GM10248 (cell line): ENCODE measurements at regions of chr16 and their contacts with region 1.

Region 1: GRCh38 chr16:27367461-27368357 is 34.3 kb upstream of the IL21R start:
- DNase-seq: peak; percentile 86
- CTCF ChIP-seq: peak; percentile 69

Region 2: GRCh38 chr16:27154705-27155521 is 212.8 kb before region 1 on chr16:
- CTCF ChIA-PET with region 1: interaction called, 19 read pairs
- POLR2A ChIA-PET with region 1: no interaction called
- DNase-seq: peak; percentile 78
- CTCF ChIP-seq: peak; percentile 95

Region 3: GRCh38 chr16:27387724-27388123 is 20.0 kb after region 1 on chr16:
- CTCF ChIA-PET with region 1: interaction called, 64 read pairs
- POLR2A ChIA-PET with region 1: no interaction called
- DNase-seq: no peak
- CTCF ChIP-seq: no peak

Region 4: GRCh38 chr16:27408012-27408601 is 40.4 kb after region 1 on chr16:
- CTCF ChIA-PET with region 1: interaction called, 47 read pairs
- POLR2A ChIA-PET with region 1: interaction called, 5 read pairs
- DNase-seq: peak; percentile 57
- CTCF ChIP-seq: no peak

Region 5: DNA sequence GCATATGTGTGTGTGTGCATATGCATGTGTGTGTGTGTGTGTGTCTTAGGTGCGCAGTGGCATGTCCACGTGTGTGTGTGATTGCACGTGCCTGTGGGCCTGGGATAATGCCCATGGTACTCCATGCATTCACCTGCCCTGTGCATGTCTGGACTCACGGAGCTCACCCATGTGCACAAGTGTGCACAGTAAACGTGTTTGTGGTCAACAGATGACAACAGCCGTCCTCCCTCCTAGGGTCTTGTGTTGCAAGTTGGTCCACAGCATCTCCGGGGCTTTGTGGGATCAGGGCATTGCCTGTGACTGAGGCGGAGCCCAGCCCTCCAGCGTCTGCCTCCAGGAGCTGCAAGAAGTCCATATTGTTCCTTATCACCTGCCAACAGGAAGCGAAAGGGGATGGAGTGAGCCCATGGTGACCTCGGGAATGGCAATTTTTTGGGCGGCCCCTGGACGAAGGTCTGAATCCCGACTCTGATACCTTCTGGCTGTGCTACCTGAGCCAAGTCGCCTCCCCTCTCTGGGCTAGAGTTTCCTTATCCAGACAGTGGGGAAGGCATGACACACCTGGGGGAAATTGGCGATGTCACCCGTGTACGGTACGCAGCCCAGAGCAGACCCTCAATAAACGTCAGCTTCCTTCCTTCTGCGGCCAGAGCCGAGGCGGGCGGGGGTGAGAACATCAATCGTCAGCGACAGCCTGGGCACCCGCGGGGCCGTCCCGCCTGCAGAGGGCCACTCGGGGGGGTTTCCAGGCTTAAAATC is 81.9 kb after region 1 on chr16:
- CTCF ChIA-PET with region 1: interaction called, 11 read pairs
- POLR2A ChIA-PET with region 1: interaction called, 3 read pairs
- DNase-seq: peak; percentile 86
- CTCF ChIP-seq: no peak